ENCODE measurements at regions of chr19 and their contacts with region 1.

Region 1: GRCh38 chr19:41753936-41754529 is 1.3 kb upstream of the CEACAM6 start:
- DNase-seq: peak; percentile 78
- H3K4me3 Mint-ChIP-seq: no peak overlapping the region
- H3K27ac Mint-ChIP-seq: no peak overlapping the region
- H3K4me1 Mint-ChIP-seq: peaks cover 5% of the 10 kb centered on the region
- H3K27me3 Mint-ChIP-seq: peaks cover 31% of the 10 kb centered on the region

Region 2: GRCh38 chr19:41641879-41642485 is 112.1 kb before region 1 on chr19:
- CTCF ChIA-PET with region 1: interaction called, 40 read pairs
- POLR2A ChIA-PET with region 1: no interaction called
- intact Hi-C with region 1: loop called (anchors 5 kb)
- DNase-seq: peak; percentile 74
- H3K4me3 Mint-ChIP-seq: no peak overlapping the region
- H3K27ac Mint-ChIP-seq: no peak overlapping the region
- H3K4me1 Mint-ChIP-seq: peaks cover 6% of the 10 kb centered on the region
- H3K27me3 Mint-ChIP-seq: peaks cover 11% of the 10 kb centered on the region

Region 3: GRCh38 chr19:41701401-41702075 is 52.5 kb before region 1 on chr19:
- CTCF ChIA-PET with region 1: interaction called, 54 read pairs
- POLR2A ChIA-PET with region 1: no interaction called
- intact Hi-C with region 1: no loop called
- DNase-seq: no peak
- H3K4me3 Mint-ChIP-seq: no peak overlapping the region
- H3K27ac Mint-ChIP-seq: no peak overlapping the region
- H3K4me1 Mint-ChIP-seq: peaks cover 3% of the 10 kb centered on the region
- H3K27me3 Mint-ChIP-seq: peaks cover 28% of the 10 kb centered on the region

Region 4: GRCh38 chr19:41734617-41735016 is 19.4 kb before region 1 on chr19:
- CTCF ChIA-PET with region 1: interaction called, 38 read pairs
- POLR2A ChIA-PET with region 1: no interaction called
- intact Hi-C with region 1: no loop called
- DNase-seq: no peak
- H3K4me3 Mint-ChIP-seq: no peak overlapping the region
- H3K27ac Mint-ChIP-seq: no peak overlapping the region
- H3K4me1 Mint-ChIP-seq: no peaks in the 10 kb centered on the region
- H3K27me3 Mint-ChIP-seq: peaks cover 39% of the 10 kb centered on the region

Region 5: DNA sequence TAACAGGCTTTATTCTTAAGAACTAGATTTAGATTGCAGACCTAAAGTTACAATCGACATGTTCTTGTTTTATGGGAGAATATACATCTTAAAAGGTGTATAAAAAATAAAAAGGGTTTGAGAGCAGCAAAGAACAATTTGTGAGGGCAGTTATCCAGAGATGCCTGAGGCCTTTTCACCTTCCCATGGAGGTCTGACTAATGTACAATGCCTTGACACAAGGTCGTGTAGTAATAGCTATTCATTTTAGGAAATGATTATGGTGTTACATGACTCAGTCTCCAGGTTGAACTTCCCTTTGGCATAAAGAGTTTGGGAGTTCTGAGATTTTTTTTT is 21.3 kb after region 1 on chr19:
- CTCF ChIA-PET with region 1: interaction called, 126 read pairs
- POLR2A ChIA-PET with region 1: interaction called, 3 read pairs
- intact Hi-C with region 1: no loop called
- DNase-seq: no peak
- H3K4me3 Mint-ChIP-seq: no peak overlapping the region
- H3K27ac Mint-ChIP-seq: no peak overlapping the region
- H3K4me1 Mint-ChIP-seq: peaks cover 34% of the 10 kb centered on the region
- H3K27me3 Mint-ChIP-seq: peaks cover 65% of the 10 kb centered on the region

Region 6: GRCh38 chr19:41795031-41795461 is 41.0 kb after region 1 on chr19:
- CTCF ChIA-PET with region 1: interaction called, 94 read pairs
- POLR2A ChIA-PET with region 1: no interaction called
- intact Hi-C with region 1: no loop called
- DNase-seq: peak; percentile 64
- H3K4me3 Mint-ChIP-seq: no peak overlapping the region
- H3K27ac Mint-ChIP-seq: no peak overlapping the region
- H3K4me1 Mint-ChIP-seq: no peaks in the 10 kb centered on the region
- H3K27me3 Mint-ChIP-seq: peaks cover 28% of the 10 kb centered on the region

Measured in activated CD4-positive, alpha-beta memory T cell treated with anti-CD3 and anti-CD28 coated beads for 36 hours (primary cell).